ENCODE measurements at regions of chr14 and their contacts with region 1.

Region 1: DNA sequence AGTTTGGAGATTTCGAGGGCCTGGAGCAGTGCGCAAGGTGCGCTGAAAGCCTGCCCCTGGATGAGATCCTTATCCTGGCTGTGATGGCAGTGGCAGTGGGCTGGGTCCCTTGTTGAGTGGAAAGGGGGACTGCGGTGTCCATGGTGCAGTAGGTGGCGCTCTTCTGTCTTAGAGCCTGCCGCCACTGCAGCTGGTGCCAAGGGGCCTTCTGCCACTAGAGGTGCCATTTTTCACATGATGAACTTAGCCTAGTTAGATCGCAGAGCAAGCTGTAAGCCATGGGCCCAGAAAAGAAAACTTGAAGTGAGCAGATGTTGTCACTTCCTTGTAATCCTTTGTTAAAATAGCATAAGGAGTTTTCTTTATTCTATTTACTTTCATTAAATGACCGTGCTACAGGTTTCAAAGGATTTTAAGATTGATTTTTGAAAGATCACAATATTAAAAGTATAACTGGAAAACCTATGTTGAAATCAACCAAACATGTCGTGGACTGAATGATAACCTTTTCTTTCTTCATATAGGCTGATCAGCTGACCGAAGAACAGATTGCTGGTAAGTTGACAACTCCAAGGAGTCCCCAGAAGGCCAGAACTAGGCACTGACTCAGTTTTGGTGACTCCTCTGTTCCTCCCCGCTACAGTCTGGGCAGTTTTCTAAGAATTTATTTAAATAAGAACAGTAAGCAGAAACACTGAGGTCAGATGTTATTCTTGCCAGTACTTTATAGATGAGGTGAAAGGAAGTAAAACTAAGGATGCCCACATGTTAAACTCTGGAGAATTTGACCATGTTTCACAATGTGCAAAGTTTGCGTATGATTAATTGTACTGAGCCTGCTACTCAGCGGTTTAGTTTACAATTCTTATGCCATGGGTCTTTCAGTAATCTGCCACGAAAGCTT is 3.0 kb downstream of the CALM1 start:
- DNase-seq: peak; percentile 60 to 94 (median 84)
- ATAC-seq: peak; percentile 34 to 46 (median 40)
- H3K4me3 ChIP-seq: peak overlapping the region; percentile 60 to 88
- H3K4me3 Mint-ChIP-seq: peak overlapping the region; percentile 95 to 98 (median 98)
- H3K27ac ChIP-seq: peak overlapping the region; percentile 82
- H3K27ac Mint-ChIP-seq: peak overlapping the region; percentile 80 to 95
- H3K4me1 ChIP-seq: peaks cover 31 to 46% of the 10 kb centered on the region in 2 experiments
- H3K4me1 Mint-ChIP-seq: peaks cover 65 to 71% (median 65%) of the 10 kb centered on the region in 3 donors
- H3K27me3 ChIP-seq: no peaks in the 10 kb centered on the region
- H3K27me3 Mint-ChIP-seq: no peaks in the 10 kb centered on the region

Region 2: GRCh38 chr14:89707086-89707485 is 692.7 kb before region 1 on chr14:
- CTCF ChIA-PET with region 1: no interaction called
- POLR2A ChIA-PET with region 1: no interaction called
- DNase-seq: no peak
- ATAC-seq: no peak
- H3K4me3 ChIP-seq: no peak overlapping the region
- H3K4me3 Mint-ChIP-seq: no peak overlapping the region
- H3K27ac ChIP-seq: no peak overlapping the region
- H3K27ac Mint-ChIP-seq: no peak overlapping the region
- H3K4me1 ChIP-seq: peaks cover 17 to 22% of the 10 kb centered on the region in 2 experiments
- H3K4me1 Mint-ChIP-seq: peaks cover 22 to 33% (median 31%) of the 10 kb centered on the region in 3 donors
- H3K27me3 ChIP-seq: no peaks in the 10 kb centered on the region
- H3K27me3 Mint-ChIP-seq: no peaks in the 10 kb centered on the region

Region 3: DNA sequence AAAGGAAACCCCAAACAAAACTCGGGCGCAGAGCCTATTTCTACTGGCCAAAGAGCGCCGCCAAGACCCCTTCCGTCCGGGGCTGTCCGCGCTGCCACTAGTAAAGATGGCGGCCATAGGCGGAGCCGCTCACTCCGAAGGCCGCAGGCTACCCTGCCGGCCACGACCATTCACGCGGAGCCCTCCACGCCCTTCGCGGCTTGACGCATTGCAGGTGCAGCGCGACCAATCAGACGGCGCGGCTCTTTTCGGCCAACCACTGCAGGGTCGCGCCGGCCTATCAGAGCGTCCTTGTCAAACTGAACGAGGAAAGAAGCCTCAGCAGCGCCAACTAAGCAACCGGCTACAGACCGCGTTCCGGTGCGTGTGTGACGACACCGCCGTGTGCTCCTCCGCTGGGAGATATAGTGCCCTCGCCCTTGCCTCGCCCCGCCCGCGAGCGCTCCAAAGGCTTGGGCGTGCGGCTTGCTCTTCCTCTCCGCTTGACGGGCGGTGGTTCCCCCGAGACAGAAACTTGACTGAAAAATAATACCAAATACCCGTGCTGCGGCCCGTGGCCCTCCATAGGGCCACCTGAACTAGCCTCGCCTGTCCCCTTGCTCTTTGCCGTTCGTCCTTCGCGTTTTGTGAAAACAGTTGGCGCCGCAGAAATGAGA is 16.6 kb before region 1 on chr14:
- CTCF ChIA-PET with region 1: interaction called, 4 to 23 read pairs
- POLR2A ChIA-PET with region 1: interaction called, 25 to 33 read pairs
- DNase-seq: peak; percentile 92 to 98 (median 96)
- ATAC-seq: peak; percentile 82 to 84 (median 83)
- H3K4me3 ChIP-seq: peak overlapping the region; percentile 96 to 99
- H3K4me3 Mint-ChIP-seq: no peak overlapping the region
- H3K27ac ChIP-seq: peak overlapping the region; percentile 100
- H3K27ac Mint-ChIP-seq: no peak overlapping the region
- H3K4me1 ChIP-seq: peaks cover 22 to 32% of the 10 kb centered on the region in 2 experiments
- H3K4me1 Mint-ChIP-seq: peaks cover 0 to 26% (median 21%) of the 10 kb centered on the region in 3 donors
- H3K27me3 ChIP-seq: no peaks in the 10 kb centered on the region
- H3K27me3 Mint-ChIP-seq: no peaks in the 10 kb centered on the region

Region 4: DNA sequence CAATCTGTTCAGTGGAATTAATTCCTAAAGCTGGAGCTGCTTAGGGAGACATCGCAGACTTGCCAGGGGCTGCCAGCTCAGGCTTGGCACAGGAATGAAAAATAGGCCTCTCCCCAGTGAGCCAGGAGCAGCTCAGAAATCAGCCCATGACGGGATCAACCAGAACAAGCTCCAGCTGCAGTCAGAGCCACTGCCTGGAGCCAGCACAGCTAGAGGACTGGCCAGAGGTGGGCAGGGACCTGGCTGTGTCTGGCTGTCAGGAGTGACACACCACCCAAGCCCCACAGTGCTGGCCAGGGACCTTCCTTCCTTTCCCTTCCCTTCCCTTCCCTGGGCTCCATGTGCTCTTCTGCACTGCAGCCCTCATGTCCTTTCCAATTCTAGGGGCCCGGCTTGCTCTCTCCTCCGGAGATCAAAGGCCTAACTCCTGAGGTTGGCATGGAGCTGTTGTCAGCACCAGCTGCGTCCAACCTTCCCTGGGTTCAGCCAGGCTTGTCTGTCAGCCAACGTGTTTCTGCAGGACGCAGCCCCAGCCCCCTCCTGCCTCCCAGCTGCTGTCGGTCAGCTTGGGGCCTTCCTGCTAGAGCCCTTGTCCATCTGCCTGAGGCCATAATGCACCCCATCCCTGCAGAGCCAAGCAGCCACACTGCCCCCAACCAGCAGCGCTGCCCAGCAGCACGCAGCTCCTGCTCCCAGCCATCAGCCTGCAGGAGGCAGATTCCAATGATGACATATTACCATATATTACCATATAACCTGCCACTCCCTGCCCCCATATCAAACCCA is 146.4 kb after region 1 on chr14:
- CTCF ChIA-PET with region 1: no interaction called
- POLR2A ChIA-PET with region 1: no interaction called
- DNase-seq: no peak
- ATAC-seq: no peak
- H3K4me3 ChIP-seq: no peak overlapping the region
- H3K4me3 Mint-ChIP-seq: no peak overlapping the region
- H3K27ac ChIP-seq: no peak overlapping the region
- H3K27ac Mint-ChIP-seq: no peak overlapping the region
- H3K4me1 ChIP-seq: no peaks in the 10 kb centered on the region
- H3K4me1 Mint-ChIP-seq: no peaks in the 10 kb centered on the region
- H3K27me3 ChIP-seq: peaks cover 0 to 14% of the 10 kb centered on the region in 2 experiments
- H3K27me3 Mint-ChIP-seq: no peaks in the 10 kb centered on the region

Region 5: GRCh38 chr14:90645842-90646443 is 246.2 kb after region 1 on chr14:
- CTCF ChIA-PET with region 1: no interaction called
- POLR2A ChIA-PET with region 1: no interaction called
- DNase-seq: no peak
- ATAC-seq: no peak
- H3K4me3 ChIP-seq: no peak overlapping the region
- H3K4me3 Mint-ChIP-seq: no peak overlapping the region
- H3K27ac ChIP-seq: no peak overlapping the region
- H3K27ac Mint-ChIP-seq: no peak overlapping the region
- H3K4me1 ChIP-seq: no peaks in the 10 kb centered on the region
- H3K4me1 Mint-ChIP-seq: no peaks in the 10 kb centered on the region
- H3K27me3 ChIP-seq: no peaks in the 10 kb centered on the region
- H3K27me3 Mint-ChIP-seq: no peaks in the 10 kb centered on the region

Region 6: GRCh38 chr14:90697577-90698206 is 297.9 kb after region 1 on chr14:
- CTCF ChIA-PET with region 1: interaction called in 1 of 2 experiments, 12 read pairs
- POLR2A ChIA-PET with region 1: interaction called in 1 of 2 experiments, 3 read pairs
- DNase-seq: peak; percentile 47 to 79 (median 67)
- ATAC-seq: peak; percentile 79 to 96 (median 88)
- H3K4me3 ChIP-seq: no peak overlapping the region
- H3K4me3 Mint-ChIP-seq: no peak overlapping the region
- H3K27ac ChIP-seq: no peak overlapping the region
- H3K27ac Mint-ChIP-seq: no peak overlapping the region
- H3K4me1 ChIP-seq: peaks cover 0 to 4% of the 10 kb centered on the region in 2 experiments
- H3K4me1 Mint-ChIP-seq: peaks cover 0 to 7% (median 7%) of the 10 kb centered on the region in 3 donors
- H3K27me3 ChIP-seq: no peaks in the 10 kb centered on the region
- H3K27me3 Mint-ChIP-seq: peaks cover 0 to 1% of the 10 kb centered on the region in 2 donors

Region 7: GRCh38 chr14:90758028-90758889 is 358.5 kb after region 1 on chr14:
- CTCF ChIA-PET with region 1: interaction called in 1 of 2 experiments, 18 read pairs
- POLR2A ChIA-PET with region 1: interaction called, 3 to 5 read pairs
- DNase-seq: peak; percentile 81 to 98 (median 89)
- ATAC-seq: peak; percentile 88 to 90 (median 90)
- H3K4me3 ChIP-seq: peak overlapping the region; percentile 64 to 73
- H3K4me3 Mint-ChIP-seq: peak overlapping the region; percentile 76 to 83 (median 80)
- H3K27ac ChIP-seq: peak overlapping the region; percentile 75
- H3K27ac Mint-ChIP-seq: peak overlapping the region; percentile 84 to 92
- H3K4me1 ChIP-seq: peaks cover 12 to 21% of the 10 kb centered on the region in 2 experiments
- H3K4me1 Mint-ChIP-seq: peaks cover 20 to 22% (median 22%) of the 10 kb centered on the region in 3 donors
- H3K27me3 ChIP-seq: no peaks in the 10 kb centered on the region
- H3K27me3 Mint-ChIP-seq: peaks cover 6 to 7% of the 10 kb centered on the region in 2 donors

Measured in T-cell (primary cell).